ENCODE measurements at regions of chr1 and their contacts with region 1.

Region 1: GRCh38 chr1:10694633-10695627 is 101.5 kb downstream of the CASZ1 start:
- DNase-seq: peak; percentile 96
- H3K4me3 ChIP-seq: peak overlapping the region; percentile 38 to 89 (median 76)
- H3K27ac ChIP-seq: peak overlapping the region; percentile 88 to 97 (median 92)
- H3K4me1 ChIP-seq: peaks cover 0 to 71% (median 66%) of the 10 kb centered on the region in 4 donors
- H3K27me3 ChIP-seq: no peaks in the 10 kb centered on the region
- CTCF ChIP-seq: no peak
- EP300 ChIP-seq: no peak
- POLR2A ChIP-seq: no peak

Region 2: GRCh38 chr1:10253755-10254154 is 441.2 kb before region 1 on chr1:
- intact Hi-C with region 1: no loop called
- DNase-seq: peak; percentile 65
- H3K4me3 ChIP-seq: no peak overlapping the region
- H3K27ac ChIP-seq: peak overlapping the region; percentile 28 to 77 (median 70)
- H3K4me1 ChIP-seq: peaks cover 0 to 63% (median 40%) of the 10 kb centered on the region in 4 donors
- H3K27me3 ChIP-seq: no peaks in the 10 kb centered on the region
- CTCF ChIP-seq: no peak
- EP300 ChIP-seq: no peak
- POLR2A ChIP-seq: no peak

Region 3: DNA sequence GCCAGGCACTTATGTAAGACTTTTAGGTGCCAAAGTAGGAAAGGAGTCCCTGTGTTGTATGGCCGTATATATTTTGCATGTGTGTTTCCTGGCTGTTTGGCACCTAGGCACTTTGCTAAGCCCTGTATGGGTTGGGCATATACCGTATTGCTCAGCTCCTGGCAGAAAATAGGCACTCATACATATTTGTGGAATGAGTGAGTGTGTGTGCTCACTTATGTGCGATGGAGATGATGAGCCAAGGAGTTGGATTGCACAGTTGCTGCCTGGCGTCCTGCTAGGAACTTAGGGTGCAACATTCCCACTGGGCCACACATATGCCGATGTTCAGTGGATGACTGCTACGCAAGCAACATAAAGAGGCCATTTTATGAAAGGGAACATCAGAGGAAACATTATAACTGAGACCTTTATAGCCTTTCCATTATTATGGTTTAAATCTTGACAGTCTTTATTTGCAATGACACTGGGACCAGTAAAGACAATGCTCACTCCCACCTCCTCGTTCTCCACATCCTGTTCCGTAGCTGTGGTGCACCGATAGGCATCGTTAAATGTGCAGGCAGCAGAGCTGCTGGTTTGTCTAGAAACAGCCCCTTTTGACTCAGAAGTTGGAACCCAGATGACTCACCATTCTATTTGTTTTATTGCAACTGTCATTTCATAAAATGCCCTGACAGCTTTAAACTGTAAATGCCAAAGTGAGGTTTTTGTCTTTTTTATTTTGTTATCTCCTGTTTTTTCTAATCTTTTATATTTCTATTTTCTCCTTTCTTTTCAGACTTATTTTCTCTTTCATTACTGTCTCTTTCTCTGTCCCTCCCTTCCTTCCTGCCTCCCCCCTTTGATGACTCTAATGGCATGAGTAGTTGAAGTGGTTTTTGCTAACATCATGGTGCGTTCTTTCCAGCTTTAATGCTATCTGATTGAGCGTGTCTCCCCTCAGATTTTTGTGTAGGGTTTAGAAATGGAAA is 184.1 kb before region 1 on chr1:
- intact Hi-C with region 1: no loop called
- DNase-seq: peak; percentile 68
- H3K4me3 ChIP-seq: no peak overlapping the region
- H3K27ac ChIP-seq: peak overlapping the region; percentile 11 to 61 (median 44)
- H3K4me1 ChIP-seq: peaks cover 0 to 42% (median 28%) of the 10 kb centered on the region in 4 donors
- H3K27me3 ChIP-seq: no peaks in the 10 kb centered on the region
- CTCF ChIP-seq: no peak
- EP300 ChIP-seq: no peak
- POLR2A ChIP-seq: no peak

Region 4: DNA sequence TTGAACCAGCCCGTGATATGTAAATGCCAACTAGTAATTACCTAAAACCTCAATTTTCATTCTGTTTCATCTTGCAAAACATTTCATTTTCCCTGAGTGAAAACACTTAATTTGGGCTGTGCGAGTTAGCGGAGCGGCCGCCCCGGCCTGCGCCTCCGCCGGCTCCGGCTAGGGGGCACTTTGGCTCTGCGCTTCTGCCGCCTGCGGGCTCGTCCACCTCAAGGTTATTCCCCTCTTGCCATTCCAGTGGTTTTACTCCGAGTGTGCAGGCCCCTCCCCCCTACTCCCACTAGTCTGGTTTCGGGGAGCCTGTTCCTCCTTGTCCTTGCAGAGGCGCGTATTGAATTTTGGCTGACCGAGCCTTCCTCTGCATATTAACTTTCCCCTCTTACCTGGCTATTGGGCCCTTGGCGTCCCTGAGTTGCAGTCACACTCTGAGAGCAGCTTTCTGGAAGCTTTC is 164.6 kb before region 1 on chr1:
- intact Hi-C with region 1: loop called (anchors 2 kb)
- DNase-seq: peak; percentile 82
- H3K4me3 ChIP-seq: peak overlapping the region in 2 of 4 donors; percentile 5 to 18
- H3K27ac ChIP-seq: peak overlapping the region; percentile 25 to 90 (median 75)
- H3K4me1 ChIP-seq: peaks cover 0 to 55% (median 40%) of the 10 kb centered on the region in 4 donors
- H3K27me3 ChIP-seq: no peaks in the 10 kb centered on the region
- CTCF ChIP-seq: peak; percentile 69 to 81 (median 75)
- EP300 ChIP-seq: no peak
- POLR2A ChIP-seq: no peak

Region 5: DNA sequence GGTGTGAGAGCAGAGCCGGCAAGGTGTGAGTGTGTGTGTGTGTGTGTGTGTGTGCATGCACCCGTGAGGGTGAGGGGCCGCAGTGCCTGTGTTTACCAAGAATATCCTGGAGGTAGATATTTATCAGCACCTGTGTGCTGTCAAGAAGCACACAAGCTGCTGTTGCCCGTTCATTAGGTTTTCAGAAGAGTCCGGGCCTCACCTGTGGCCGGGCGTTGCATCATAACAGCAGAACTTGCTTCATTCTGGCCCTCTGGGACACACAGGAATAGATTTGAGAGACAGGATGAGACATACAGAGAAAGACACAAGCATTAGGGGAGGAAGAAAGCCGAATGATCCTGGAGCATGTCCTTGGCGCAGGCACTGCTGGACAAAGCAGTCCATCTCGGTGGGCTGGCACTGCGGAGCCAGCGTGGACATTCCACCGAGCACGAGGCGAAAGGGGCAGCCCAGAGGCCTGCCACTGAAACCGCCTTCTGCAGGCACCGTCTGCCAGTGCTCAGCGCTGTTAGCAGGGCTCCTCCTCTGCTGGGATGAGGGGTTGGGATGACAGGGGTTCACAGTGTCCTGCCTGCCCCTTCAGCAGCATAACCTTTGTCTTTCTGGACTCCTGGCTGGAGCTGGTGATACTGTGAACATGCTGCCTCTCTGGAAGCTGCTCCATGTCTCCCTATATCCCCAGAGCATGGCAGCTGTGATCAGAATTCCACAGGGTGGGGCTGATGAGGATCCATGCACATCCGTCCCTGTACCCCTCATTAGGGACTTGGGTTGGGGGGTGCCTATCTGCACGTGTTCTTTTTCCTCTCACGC is 139.1 kb before region 1 on chr1:
- intact Hi-C with region 1: no loop called
- DNase-seq: no peak
- H3K4me3 ChIP-seq: no peak overlapping the region
- H3K27ac ChIP-seq: no peak overlapping the region
- H3K4me1 ChIP-seq: no peaks in the 10 kb centered on the region
- H3K27me3 ChIP-seq: no peaks in the 10 kb centered on the region
- CTCF ChIP-seq: no peak
- EP300 ChIP-seq: no peak
- POLR2A ChIP-seq: no peak

Region 6: DNA sequence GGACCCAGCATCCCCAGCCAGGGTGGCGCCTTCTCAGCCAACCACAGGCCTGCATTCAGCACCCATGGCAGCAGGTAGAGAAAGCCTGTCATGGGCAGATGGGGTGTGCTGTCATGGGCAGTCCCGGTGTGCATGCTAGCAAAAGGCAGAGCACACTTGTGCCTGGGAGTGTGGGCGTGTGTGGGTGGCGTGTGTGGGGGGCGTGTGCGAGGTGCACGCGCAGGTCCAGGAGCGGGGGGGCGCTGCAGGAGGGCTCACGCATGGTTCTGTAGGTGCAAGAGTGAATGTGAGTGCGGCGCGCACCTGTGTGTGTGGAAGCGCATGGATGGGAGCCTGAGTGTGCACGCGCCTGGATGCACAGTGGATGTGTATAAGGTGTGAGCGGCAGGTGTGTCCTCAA is 35.7 kb before region 1 on chr1:
- intact Hi-C with region 1: loop called (anchors 2 kb)
- DNase-seq: no peak
- H3K4me3 ChIP-seq: no peak overlapping the region
- H3K27ac ChIP-seq: peak overlapping the region; percentile 81 to 98 (median 94)
- H3K4me1 ChIP-seq: peaks cover 0 to 98% (median 80%) of the 10 kb centered on the region in 4 donors
- H3K27me3 ChIP-seq: no peaks in the 10 kb centered on the region
- CTCF ChIP-seq: no peak
- EP300 ChIP-seq: no peak
- POLR2A ChIP-seq: no peak

Region 7: DNA sequence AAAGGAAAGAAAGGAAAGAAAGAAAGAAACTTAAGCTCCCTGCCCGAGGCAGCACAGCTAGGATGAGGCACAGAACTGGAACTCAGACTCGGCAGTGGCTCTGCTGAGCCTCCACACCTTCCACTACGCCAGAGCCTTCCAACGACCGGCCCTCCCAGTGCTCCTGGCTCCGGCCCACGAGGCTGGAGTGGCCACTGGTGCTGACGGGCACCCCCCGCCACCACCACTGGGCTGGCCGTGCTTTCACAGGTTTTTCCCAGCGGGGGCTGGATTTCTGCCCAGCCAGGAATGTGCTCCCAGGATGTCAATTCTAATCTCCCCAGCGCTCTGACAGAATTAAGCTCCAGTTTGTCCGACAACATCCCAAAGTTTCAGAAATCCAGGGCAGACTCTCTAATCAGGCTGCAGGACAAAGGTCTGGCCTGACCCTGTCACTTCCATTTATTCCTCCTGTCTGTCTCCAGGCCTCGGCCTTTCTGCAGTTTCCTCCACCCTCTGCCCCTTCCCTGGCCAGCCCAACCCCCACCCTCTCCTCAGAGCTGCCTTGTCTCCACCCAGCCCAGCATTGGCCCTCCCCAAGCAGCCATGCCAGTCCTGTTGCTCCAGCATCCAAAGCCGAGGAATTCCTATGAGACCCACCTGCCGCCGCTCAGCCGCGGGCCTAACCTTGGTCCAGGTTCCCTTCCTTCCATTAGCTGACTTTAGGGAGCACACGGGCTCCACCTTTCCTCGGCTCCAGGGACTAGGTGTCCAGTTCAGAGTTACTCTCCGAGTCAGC is 19.6 kb after region 1 on chr1:
- intact Hi-C with region 1: no loop called
- DNase-seq: no peak
- H3K4me3 ChIP-seq: no peak overlapping the region
- H3K27ac ChIP-seq: peak overlapping the region; percentile 44 to 76 (median 66)
- H3K4me1 ChIP-seq: peaks cover 0 to 50% (median 28%) of the 10 kb centered on the region in 4 donors
- H3K27me3 ChIP-seq: no peaks in the 10 kb centered on the region
- CTCF ChIP-seq: no peak
- EP300 ChIP-seq: no peak
- POLR2A ChIP-seq: no peak

Region 8: DNA sequence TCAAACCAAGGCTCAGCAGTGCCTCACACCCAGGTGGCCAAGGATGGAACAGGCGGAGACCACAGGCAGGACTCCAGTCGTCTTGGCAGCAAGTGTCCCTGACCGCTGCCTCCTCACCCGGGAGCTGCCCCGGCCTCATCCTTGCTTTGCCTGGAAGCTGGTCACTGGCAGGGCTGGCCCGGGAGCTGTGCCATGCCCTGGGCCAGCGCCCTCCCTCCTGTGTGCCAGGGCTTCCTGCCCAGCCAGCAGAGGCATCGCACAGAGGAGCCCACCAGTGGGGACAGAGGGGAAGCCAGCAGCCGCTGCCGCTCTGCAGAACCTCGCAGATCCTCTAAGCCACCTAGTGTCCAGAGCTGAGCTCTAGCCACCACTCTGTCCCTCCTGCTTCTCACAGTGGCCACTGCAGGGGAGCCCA is 93.7 kb after region 1 on chr1:
- intact Hi-C with region 1: loop called (anchors 2 kb)
- DNase-seq: peak; percentile 82
- H3K4me3 ChIP-seq: no peak overlapping the region
- H3K27ac ChIP-seq: peak overlapping the region in 3 of 4 donors; percentile 89 to 92 (median 91)
- H3K4me1 ChIP-seq: peaks cover 0 to 91% (median 67%) of the 10 kb centered on the region in 4 donors
- H3K27me3 ChIP-seq: peaks cover under 1 to 12% (median 4%) of the 10 kb centered on the region in 3 donors
- CTCF ChIP-seq: peak in 3 of 4 experiments; percentile 20 to 31 (median 25)
- EP300 ChIP-seq: no peak
- POLR2A ChIP-seq: no peak